Panc1 (cell line): ENCODE measurements at regions of chr5 and their contacts with region 1.

Region 1: GRCh38 chr5:76831110-76831452 is 12.3 kb downstream of the F2RL1 start:
- DNase-seq: no peak
- ATAC-seq: peak; percentile 80
- H3K4me3 ChIP-seq: no peak overlapping the region
- H3K27ac ChIP-seq: no peak overlapping the region
- H3K4me1 ChIP-seq: peaks cover 11% of the 10 kb centered on the region
- H3K27me3 ChIP-seq: no peaks in the 10 kb centered on the region
- CTCF ChIP-seq: no peak

Region 2: GRCh38 chr5:76521240-76521758 is 309.8 kb before region 1 on chr5:
- CTCF ChIA-PET with region 1: no interaction called
- POLR2A ChIA-PET with region 1: no interaction called
- in situ Hi-C with region 1: no loop called
- intact Hi-C with region 1: loop called (anchors 5 kb)
- DNase-seq: no peak
- ATAC-seq: no peak
- H3K4me3 ChIP-seq: no peak overlapping the region
- H3K27ac ChIP-seq: no peak overlapping the region
- H3K4me1 ChIP-seq: no peaks in the 10 kb centered on the region
- H3K27me3 ChIP-seq: peaks cover 15% of the 10 kb centered on the region
- CTCF ChIP-seq: no peak